Adrenal gland (tissue), 19 donors: ENCODE measurements at regions of chr11 and their contacts with region 1.

Region 1: DNA sequence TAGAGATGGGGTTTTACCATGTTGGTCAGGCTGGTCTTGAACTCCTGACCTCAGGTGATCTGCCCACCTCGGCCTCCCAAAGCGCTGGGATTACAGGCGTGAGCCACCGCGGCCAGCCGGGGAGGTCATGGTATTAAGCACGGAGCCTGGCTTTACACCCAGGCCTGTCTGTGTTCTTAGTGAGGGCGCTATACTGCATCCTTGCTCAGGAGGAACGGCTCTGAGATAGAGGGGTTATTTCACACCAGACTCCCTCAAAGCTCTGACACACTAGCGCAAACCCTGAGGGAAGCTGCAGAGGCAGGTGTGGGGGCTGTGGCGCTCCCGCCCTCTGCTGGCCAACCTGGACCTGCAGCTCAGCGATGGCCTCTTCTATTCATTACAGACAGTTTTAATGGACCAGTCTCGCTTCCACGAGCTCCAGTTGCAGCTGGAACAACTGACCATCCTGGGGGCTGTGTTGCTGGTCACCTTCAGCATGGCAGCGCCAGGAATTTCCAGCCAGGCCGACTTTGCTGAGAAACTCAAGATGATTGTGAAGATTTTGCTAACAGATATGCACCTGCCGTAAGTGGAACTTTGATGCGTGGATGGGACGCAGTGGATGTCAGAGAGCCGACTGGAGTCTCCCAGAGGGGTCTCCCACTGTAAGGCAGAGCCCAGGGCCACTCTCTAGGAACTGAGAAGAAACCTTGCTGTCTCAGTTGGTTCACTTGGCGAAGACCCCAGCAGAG is 26.2 kb downstream of the TCP11L1 start:
- DNase-seq: peak; percentile 60 to 89 (median 72)
- H3K4me3 ChIP-seq: no peak overlapping the region
- H3K27ac ChIP-seq: no peak overlapping the region
- H3K4me1 ChIP-seq: peaks cover 0 to 18% of the 10 kb centered on the region in 2 donors
- H3K27me3 ChIP-seq: no peaks in the 10 kb centered on the region
- CTCF ChIP-seq: peak; percentile 77 to 91 (median 83)
- POLR2A ChIP-seq: no peak

Region 2: GRCh38 chr11:32884770-32885384 is 180.7 kb before region 1 on chr11:
- intact Hi-C with region 1: loop called in 1 of 2 experiments (anchors 10 kb)
- DNase-seq: peak in 1 of 7 donors; percentile 4
- H3K4me3 ChIP-seq: no peak overlapping the region
- H3K27ac ChIP-seq: no peak overlapping the region
- H3K4me1 ChIP-seq: no peaks in the 10 kb centered on the region
- H3K27me3 ChIP-seq: no peaks in the 10 kb centered on the region
- CTCF ChIP-seq: peak in 3 of 6 experiments; percentile 17 to 43 (median 29)
- POLR2A ChIP-seq: no peak

Region 3: DNA sequence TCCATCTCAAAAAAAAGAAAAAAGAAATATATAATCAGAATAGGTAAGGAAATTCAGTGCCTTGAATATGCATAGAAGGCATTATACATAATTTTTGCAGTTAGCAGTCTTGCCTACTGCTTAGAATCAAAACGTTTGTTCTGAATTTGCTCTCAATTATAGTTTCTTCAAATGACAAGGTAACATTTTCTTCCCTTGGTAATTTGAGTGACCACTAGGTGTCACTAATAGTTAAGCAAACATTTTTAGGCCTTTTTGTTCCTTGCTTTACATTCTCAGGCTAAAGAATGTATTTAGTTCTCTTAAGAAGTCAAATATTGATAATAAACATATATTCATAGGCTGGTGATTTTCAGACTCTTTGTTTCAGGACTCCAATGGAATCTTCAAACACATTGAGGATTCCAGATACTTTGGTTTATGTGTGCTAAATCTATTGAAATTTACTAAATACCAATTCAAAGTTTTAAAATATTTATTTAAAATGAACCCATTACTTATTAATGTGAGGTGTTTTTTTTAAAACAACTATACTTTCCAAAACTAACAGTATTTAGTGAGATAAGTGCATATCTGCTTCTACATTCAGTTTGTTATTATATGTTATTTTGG is 105.0 kb before region 1 on chr11:
- intact Hi-C with region 1: loop called (anchors 2 to 5 kb)
- DNase-seq: no peak
- H3K4me3 ChIP-seq: no peak overlapping the region
- H3K27ac ChIP-seq: no peak overlapping the region
- H3K4me1 ChIP-seq: no peaks in the 10 kb centered on the region
- H3K27me3 ChIP-seq: no peaks in the 10 kb centered on the region
- CTCF ChIP-seq: peak; percentile 49 to 72 (median 59)
- POLR2A ChIP-seq: no peak